ENCODE measurements at regions of chr3 and their contacts with region 1.

Region 1: DNA sequence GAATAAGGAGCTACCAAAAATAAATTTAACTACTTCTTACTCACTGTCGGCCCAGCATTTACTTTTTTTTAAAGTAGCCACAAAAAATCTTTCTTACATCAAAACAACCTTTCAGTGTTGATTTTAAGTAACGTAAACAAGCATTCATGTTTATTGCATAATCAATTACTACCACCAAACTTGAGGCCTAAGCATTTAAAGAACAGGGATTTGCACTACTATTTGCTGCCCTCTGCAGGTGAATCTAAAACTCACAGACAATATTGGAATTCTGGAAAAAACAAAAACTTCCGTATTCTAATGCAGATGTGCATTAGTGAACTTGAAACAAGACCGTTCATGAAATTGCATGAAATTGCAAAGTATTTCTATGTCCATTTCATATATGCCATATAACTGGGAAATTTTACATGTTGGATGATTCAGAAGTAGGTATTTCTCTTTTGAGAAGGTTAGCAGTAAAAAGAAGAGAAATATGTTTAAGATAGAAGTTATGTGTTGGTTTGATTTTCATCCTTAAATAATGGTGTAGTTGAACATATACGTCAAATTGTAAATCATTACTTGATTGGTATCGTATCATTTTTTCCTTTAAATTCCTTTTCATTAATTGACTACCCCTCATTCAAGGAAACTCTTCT is 55.6 kb downstream of the CGGBP1 start:
- DNase-seq: peak; percentile 7
- H3K4me3 Mint-ChIP-seq: no peak overlapping the region
- H3K27ac Mint-ChIP-seq: no peak overlapping the region
- H3K4me1 Mint-ChIP-seq: no peaks in the 10 kb centered on the region
- H3K27me3 Mint-ChIP-seq: no peaks in the 10 kb centered on the region

Region 2: DNA sequence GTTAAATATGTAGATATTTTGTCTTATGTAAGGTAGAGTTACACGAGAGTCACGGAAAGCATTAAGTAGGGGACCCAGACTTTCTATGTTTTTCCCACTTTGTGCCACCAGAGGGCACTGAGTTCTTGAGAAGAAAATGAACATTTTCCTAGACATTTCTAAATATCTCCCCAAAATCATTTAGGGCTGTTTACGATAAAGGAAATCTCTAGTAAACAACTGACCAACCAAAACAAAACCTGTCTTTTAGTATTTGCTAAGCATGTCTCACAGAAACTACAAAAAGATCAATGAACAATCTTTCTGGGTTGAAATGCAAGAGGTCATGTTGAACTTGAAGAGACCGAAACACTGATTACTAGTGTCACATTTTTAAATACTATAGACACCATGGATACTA is 743.0 kb before region 1 on chr3:
- CTCF ChIA-PET with region 1: interaction called, 5 read pairs
- intact Hi-C with region 1: loop called (anchors 1 kb)
- DNase-seq: peak; percentile 66
- H3K4me3 Mint-ChIP-seq: no peak overlapping the region
- H3K27ac Mint-ChIP-seq: no peak overlapping the region
- H3K4me1 Mint-ChIP-seq: no peaks in the 10 kb centered on the region
- H3K27me3 Mint-ChIP-seq: no peaks in the 10 kb centered on the region

Region 3: GRCh38 chr3:87350364-87351199 is 652.7 kb before region 1 on chr3:
- CTCF ChIA-PET with region 1: interaction called, 13 read pairs
- intact Hi-C with region 1: loop called (anchors 1 kb)
- DNase-seq: peak; percentile 22
- H3K4me3 Mint-ChIP-seq: no peak overlapping the region
- H3K27ac Mint-ChIP-seq: no peak overlapping the region
- H3K4me1 Mint-ChIP-seq: peaks cover 2% of the 10 kb centered on the region
- H3K27me3 Mint-ChIP-seq: peaks cover 3% of the 10 kb centered on the region

Region 4: GRCh38 chr3:87771341-87772192 is 231.7 kb before region 1 on chr3:
- CTCF ChIA-PET with region 1: interaction called, 10 read pairs
- intact Hi-C with region 1: loop called (anchors 1 kb)
- DNase-seq: peak; percentile 56
- H3K4me3 Mint-ChIP-seq: no peak overlapping the region
- H3K27ac Mint-ChIP-seq: no peak overlapping the region
- H3K4me1 Mint-ChIP-seq: no peaks in the 10 kb centered on the region
- H3K27me3 Mint-ChIP-seq: peaks cover 17% of the 10 kb centered on the region

Region 5: DNA sequence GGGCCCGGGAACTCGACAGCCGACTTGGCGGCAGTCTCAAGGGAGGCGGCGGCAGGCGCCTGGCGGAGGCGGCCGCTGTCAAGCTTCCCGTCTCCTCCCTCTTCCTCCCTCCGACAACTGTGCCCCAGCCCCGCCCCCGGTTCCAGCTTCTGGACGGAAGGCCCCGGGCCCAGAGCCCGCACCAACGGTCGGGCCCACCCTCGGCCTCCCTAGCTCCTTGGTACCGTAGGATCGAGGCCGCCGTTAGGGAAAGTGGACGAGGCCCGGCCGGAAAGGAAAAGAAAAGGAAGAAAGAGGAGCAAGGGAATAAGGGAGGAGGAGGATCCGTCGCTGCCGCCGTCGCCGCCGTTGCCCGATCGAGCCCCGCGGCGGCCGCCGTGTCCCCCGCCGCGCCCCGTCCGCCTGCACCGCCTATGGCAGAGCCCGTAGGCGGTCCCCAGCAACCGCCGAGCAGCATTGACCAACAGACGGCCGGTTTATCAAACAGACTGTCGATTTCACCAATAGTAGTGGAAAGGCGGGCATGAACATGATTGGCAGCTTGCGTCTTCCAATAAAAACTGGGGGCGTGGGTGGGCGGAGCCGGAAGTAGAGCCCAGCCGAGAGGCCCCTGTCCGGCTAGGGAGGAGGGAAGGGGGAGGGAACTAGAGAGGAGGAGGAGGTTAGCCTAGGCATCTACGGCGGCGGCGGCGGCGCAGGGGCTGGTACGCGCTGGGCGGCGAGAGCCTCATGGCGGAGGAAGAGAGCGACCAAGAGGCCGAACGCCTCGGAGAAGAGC is 55.5 kb after region 1 on chr3 and contains the starts of genes CGGBP1 and ZNF654:
- CTCF ChIA-PET with region 1: no interaction called
- intact Hi-C with region 1: loop called (anchors 2 kb)
- DNase-seq: peak; percentile 99
- H3K4me3 Mint-ChIP-seq: peak within 1 kb of the TSS; percentile 90
- H3K27ac Mint-ChIP-seq: peak within 1 kb of the TSS; percentile 98
- H3K4me1 Mint-ChIP-seq: peaks cover 43% of the 10 kb centered on the region
- H3K27me3 Mint-ChIP-seq: no peaks in the 10 kb centered on the region
- total RNA-seq, gene CGGBP1: 91.9 to 94.0 TPM
- total RNA-seq, gene ZNF654: 17.8 to 18.8 TPM

Region 6: GRCh38 chr3:88133711-88134263 is 130.6 kb after region 1 on chr3:
- CTCF ChIA-PET with region 1: no interaction called
- intact Hi-C with region 1: no loop called
- DNase-seq: no peak
- H3K4me3 Mint-ChIP-seq: no peak overlapping the region
- H3K27ac Mint-ChIP-seq: no peak overlapping the region
- H3K4me1 Mint-ChIP-seq: peaks cover 11% of the 10 kb centered on the region
- H3K27me3 Mint-ChIP-seq: no peaks in the 10 kb centered on the region

Measured in activated naive CD4-positive, alpha-beta T cell treated with anti-CD3 and anti-CD28 coated beads for 36 hours (primary cell).